Activated CD4-positive, alpha-beta memory T cell treated with anti-CD3 and anti-CD28 coated beads, Interleukin-2, amount 10 ng/mL, durations not matched to agents 7 days and 5 days (primary cell): ENCODE measurements at regions of chr4 and their contacts with region 1.

Region 1: DNA sequence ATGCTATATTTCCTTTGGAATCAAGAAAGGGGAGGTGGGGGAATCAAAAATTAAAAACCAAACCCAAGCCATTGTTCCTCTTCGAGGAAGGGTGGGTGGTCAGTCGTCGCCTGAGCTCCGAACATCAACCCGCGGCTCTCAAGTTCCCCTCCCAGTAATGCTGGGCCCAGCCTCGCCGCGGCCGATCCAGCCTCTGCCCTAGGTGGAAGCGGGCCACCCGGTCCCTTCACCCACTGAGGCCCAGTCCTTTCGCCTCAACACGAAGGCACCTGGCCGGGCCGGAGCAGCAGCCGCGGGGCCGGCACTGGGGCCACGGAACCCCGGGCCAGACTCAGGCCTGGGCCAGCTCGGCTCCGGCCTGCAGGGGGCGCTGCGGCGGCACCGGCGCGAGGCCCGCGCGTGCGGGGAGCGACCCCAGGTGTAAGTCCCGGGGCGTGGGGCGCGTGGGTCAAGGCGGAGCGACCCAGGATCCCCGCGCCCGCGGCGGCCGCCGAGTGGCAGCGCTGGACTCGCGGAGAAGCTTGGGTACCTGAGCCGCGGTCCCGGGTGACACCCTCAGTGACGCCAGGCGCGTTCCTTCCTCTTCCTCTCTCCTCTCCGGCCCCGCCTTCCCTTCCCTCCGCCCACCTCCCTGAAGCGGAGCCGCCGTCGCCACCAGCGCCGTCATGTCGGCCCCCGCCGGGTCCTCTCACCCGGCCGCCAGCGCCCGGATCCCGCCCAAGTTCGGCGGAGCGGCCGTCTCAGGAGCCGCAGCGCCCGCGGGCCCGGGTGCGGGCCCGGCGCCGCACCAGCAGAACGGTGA is at the start of gene SEC24B:
- DNase-seq: peak; percentile 91
- H3K4me3 Mint-ChIP-seq: peak within 1 kb of the TSS; percentile 84
- H3K27ac Mint-ChIP-seq: peak within 1 kb of the TSS; percentile 83
- H3K4me1 Mint-ChIP-seq: peaks cover 57% of the 10 kb centered on the region
- H3K27me3 Mint-ChIP-seq: no peaks in the 10 kb centered on the region
- total RNA-seq, gene SEC24B: 25.7 to 27.0 TPM

Region 2: GRCh38 chr4:109462297-109462696 is 28.9 kb after region 1 on chr4:
- CTCF ChIA-PET with region 1: interaction called, 14 read pairs
- POLR2A ChIA-PET with region 1: no interaction called
- DNase-seq: no peak
- H3K4me3 Mint-ChIP-seq: no peak overlapping the region
- H3K27ac Mint-ChIP-seq: no peak overlapping the region
- H3K4me1 Mint-ChIP-seq: no peaks in the 10 kb centered on the region
- H3K27me3 Mint-ChIP-seq: no peaks in the 10 kb centered on the region

Region 3: DNA sequence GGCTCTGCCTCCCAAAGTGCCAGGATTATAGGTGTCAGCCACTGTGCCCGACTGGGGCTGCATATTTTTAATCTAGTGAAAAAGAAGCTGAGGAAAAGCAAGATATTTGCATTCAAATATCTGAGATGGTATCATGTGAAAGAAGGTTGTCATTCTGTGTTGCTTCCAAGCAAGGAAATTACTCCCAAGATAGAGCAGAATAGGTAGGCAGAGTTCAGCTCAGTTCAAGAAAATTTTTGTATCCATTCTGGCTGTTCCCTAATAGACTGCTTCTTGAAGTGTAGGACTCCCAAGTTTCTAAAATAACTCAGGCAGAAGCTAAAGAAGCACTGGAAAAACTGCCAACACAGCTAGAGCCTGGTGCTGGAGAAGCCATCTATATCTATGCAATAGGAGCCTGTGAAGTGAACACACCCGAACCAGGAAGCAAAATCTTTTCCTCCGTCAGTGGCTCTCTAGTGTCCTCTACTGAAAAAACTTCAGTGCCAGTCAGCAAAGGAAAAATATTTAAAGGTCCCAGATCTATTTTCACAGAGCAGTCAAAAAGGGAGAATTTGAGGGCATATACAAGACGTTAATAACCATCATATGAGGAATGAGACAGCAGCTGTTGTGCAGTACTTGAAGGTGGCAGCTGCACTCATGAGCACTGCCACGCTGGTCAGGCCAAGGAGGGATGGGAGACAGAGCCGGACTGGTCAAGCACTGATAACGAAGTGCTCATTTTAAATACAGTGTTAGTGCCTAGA is 140.9 kb after region 1 on chr4:
- CTCF ChIA-PET with region 1: interaction called, 11 read pairs
- POLR2A ChIA-PET with region 1: interaction called, 3 read pairs
- DNase-seq: no peak
- H3K4me3 Mint-ChIP-seq: no peak overlapping the region
- H3K27ac Mint-ChIP-seq: no peak overlapping the region
- H3K4me1 Mint-ChIP-seq: peaks cover 36% of the 10 kb centered on the region
- H3K27me3 Mint-ChIP-seq: no peaks in the 10 kb centered on the region

Region 4: DNA sequence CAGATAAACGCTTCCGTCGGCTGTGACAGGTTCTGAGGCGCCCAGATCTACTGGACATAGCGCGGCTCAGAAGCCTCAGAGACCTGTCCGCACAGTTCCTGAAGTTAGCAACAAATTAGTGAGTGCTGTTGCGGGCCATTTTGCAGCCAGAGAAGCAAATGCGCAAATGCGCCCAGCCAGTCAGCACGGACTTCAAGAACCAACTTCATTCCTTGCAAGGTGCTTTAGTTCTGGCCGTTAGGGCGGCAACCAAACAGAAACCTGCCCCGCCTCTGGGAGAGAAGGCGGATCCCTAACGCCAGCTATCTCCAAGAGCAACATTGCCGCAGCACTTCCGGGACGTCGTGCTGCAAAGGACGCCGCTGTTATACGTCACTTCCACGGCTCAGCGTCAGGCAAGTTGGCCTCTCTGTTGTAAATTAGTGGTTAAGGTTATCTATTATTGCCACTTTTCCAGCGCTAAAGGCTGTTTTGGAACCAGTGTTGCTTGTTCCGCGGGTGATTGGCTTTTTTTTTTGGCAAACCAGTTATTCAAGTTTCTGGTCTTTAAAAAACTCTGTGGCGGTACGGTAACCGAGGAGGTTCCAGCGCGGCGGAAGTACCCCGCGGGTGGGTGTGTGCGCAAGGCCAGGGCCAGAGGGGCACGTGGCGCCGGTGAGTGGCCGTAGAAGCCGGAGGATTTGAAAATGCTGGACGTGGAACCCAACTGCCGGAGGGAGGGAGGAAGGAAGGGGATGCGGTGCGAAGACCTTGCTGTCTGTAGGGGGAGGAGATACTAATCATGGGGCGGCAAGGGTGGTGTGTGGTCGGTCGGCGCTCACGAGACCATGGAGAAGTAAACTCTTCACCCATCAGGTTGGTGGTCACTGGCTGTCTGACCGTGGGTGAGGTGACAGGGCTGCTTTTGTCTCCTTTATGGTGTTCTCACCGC is 382.0 kb after region 1 on chr4 and contains the start of gene GAR1:
- CTCF ChIA-PET with region 1: interaction called, 15 read pairs
- POLR2A ChIA-PET with region 1: interaction called, 12 read pairs
- DNase-seq: peak; percentile 93
- H3K4me3 Mint-ChIP-seq: peak within 1 kb of the TSS; percentile 98
- H3K27ac Mint-ChIP-seq: peak within 1 kb of the TSS; percentile 97
- H3K4me1 Mint-ChIP-seq: peaks cover 69% of the 10 kb centered on the region
- H3K27me3 Mint-ChIP-seq: no peaks in the 10 kb centered on the region
- total RNA-seq, gene GAR1: 26.1 to 27.5 TPM

Region 5: DNA sequence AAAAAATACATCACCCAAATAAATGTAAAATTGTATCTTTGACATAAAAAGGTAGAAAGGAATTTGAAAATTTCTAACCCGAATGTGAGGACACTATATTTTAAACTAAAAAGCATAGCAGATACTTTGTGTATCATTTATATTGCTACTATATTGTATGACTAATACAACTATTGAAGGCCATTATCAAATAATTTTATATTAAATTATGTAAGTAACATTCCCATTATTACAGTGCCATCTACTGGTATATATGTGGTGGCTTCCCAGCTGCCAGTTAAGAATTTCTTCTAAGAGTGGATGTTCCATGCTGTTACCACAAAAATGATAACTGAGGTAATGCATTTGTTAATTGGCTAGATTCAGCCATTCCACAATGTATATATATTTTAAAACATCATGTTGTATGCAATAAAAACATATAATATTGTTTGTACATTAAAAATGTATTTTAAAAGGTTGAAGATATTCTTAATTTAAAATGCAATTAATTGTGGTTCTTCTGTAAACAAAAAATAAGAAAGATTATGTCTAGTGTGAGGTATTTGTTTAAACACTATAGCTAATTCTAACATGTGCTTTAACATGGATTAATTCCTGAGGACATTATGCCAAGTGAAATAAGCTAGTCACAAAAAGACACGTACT is 544.6 kb after region 1 on chr4:
- CTCF ChIA-PET with region 1: interaction called, 19 read pairs
- POLR2A ChIA-PET with region 1: no interaction called
- DNase-seq: no peak
- H3K4me3 Mint-ChIP-seq: no peak overlapping the region
- H3K27ac Mint-ChIP-seq: no peak overlapping the region
- H3K4me1 Mint-ChIP-seq: peaks cover 5% of the 10 kb centered on the region
- H3K27me3 Mint-ChIP-seq: peaks cover 38% of the 10 kb centered on the region